GM12878 (cell line): ENCODE measurements at regions of chr2 and their contacts with region 1.

Region 1: GRCh38 chr2:27174316-27175040 is 25.7 kb downstream of the TCF23 start:
- DNase-seq: no peak
- ATAC-seq: peak; percentile 46; the same call in 2 of the 3 replicates
- H3K4me3 ChIP-seq: no peak overlapping the region
- H3K27ac ChIP-seq: no peak overlapping the region
- H3K4me1 ChIP-seq: peaks cover 15% of the 10 kb centered on the region
- H3K27me3 ChIP-seq: no peaks in the 10 kb centered on the region; a peak in 1 of 4 replicates
- CTCF ChIP-seq: no peak
- EP300 ChIP-seq: no peak
- POLR2A ChIP-seq: no peak
- RAD21 ChIP-seq: no peak

Region 2: GRCh38 chr2:27133905-27134780 is 40.3 kb before region 1 on chr2 and contains the start of gene PREB:
- CTCF ChIA-PET with region 1: interaction called, 18 read pairs
- POLR2A ChIA-PET with region 1: no interaction called
- RAD21 ChIA-PET with region 1: interaction called, 3 read pairs
- SMC1A ChIA-PET with region 1: interaction called, 5 read pairs
- in situ Hi-C with region 1: no loop called
- intact Hi-C with region 1: no loop called
- DNase-seq: peak; percentile 88
- ATAC-seq: peak; percentile 98
- H3K4me3 ChIP-seq: peak within 1 kb of the TSS; percentile 97
- H3K27ac ChIP-seq: peak within 1 kb of the TSS; percentile 90
- H3K4me1 ChIP-seq: peaks cover 8% of the 10 kb centered on the region
- H3K27me3 ChIP-seq: no peaks in the 10 kb centered on the region
- CTCF ChIP-seq: peak; percentile 38 to 43 (median 41); a peak in 4 of 6 replicates
- EP300 ChIP-seq: no peak
- POLR2A ChIP-seq: peak; percentile 89
- RAD21 ChIP-seq: peak; percentile 45; the same call in 1 of the 2 replicates
- polyA plus RNA-seq, gene PREB: 26.3 to 45.7 TPM

Region 3: GRCh38 chr2:27152786-27153510 is 21.5 kb before region 1 on chr2:
- CTCF ChIA-PET with region 1: interaction called, 10 read pairs
- POLR2A ChIA-PET with region 1: interaction called, 4 read pairs
- RAD21 ChIA-PET with region 1: no interaction called
- SMC1A ChIA-PET with region 1: no interaction called
- in situ Hi-C with region 1: no loop called
- intact Hi-C with region 1: no loop called
- DNase-seq: no peak
- ATAC-seq: no peak
- H3K4me3 ChIP-seq: no peak overlapping the region
- H3K27ac ChIP-seq: no peak overlapping the region
- H3K4me1 ChIP-seq: no peaks in the 10 kb centered on the region
- H3K27me3 ChIP-seq: no peaks in the 10 kb centered on the region; a peak in 1 of 4 replicates
- CTCF ChIP-seq: no peak
- EP300 ChIP-seq: no peak
- POLR2A ChIP-seq: no peak
- RAD21 ChIP-seq: no peak

Region 4: GRCh38 chr2:27241761-27242613 is 67.5 kb after region 1 on chr2:
- CTCF ChIA-PET with region 1: no interaction called
- POLR2A ChIA-PET with region 1: no interaction called
- RAD21 ChIA-PET with region 1: no interaction called
- SMC1A ChIA-PET with region 1: no interaction called
- in situ Hi-C with region 1: no loop called
- intact Hi-C with region 1: no loop called
- DNase-seq: no peak
- ATAC-seq: no peak
- H3K4me3 ChIP-seq: no peak overlapping the region
- H3K27ac ChIP-seq: no peak overlapping the region
- H3K4me1 ChIP-seq: no peaks in the 10 kb centered on the region
- H3K27me3 ChIP-seq: no peaks in the 10 kb centered on the region
- CTCF ChIP-seq: no peak
- EP300 ChIP-seq: no peak
- POLR2A ChIP-seq: no peak
- RAD21 ChIP-seq: no peak